ENCODE measurements at regions of chr17 and their contacts with region 1.

Region 1: GRCh38 chr17:50397111-50397918 is at the start of gene LRRC59:
- DNase-seq: peak; percentile 74 to 92 (median 84)
- H3K4me3 ChIP-seq: peak within 1 kb of the TSS; percentile 53 to 100 (median 93)
- H3K27ac ChIP-seq: peak within 1 kb of the TSS in 39 of 59 donors; percentile 7 to 88 (median 57)
- H3K27me3 ChIP-seq: no peaks in the 10 kb centered on the region
- CTCF ChIP-seq: peak; percentile 83 to 100 (median 99)
- total RNA-seq, gene LRRC59: 26.1 to 54.3 (median 38.0) TPM

Region 2: DNA sequence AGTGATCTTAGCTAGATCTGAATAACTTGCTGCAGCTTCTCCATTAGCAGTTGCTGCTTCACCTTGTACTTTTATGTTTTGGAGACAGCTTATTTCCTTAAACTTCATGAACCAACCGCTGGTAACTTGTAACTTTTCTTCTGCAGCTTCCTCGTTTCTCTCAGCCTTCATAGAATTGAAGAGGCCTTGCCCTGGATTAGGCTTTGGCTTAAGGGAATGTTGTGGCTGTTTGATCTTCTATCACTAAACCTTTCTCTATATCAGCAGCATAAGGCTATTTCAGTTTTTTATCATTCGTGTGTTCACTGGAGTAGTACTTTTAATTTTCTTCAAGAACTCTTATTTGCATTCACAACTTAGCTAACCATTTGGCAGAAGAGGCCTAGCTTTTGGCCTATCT is 144.5 kb before region 1 on chr17:
- intact Hi-C with region 1: no loop called
- DNase-seq: no peak
- H3K4me3 ChIP-seq: no peak overlapping the region
- H3K27ac ChIP-seq: no peak overlapping the region
- H3K27me3 ChIP-seq: peaks cover 0 to 15% (median 0%) of the 10 kb centered on the region in 45 donors
- CTCF ChIP-seq: no peak

Region 3: DNA sequence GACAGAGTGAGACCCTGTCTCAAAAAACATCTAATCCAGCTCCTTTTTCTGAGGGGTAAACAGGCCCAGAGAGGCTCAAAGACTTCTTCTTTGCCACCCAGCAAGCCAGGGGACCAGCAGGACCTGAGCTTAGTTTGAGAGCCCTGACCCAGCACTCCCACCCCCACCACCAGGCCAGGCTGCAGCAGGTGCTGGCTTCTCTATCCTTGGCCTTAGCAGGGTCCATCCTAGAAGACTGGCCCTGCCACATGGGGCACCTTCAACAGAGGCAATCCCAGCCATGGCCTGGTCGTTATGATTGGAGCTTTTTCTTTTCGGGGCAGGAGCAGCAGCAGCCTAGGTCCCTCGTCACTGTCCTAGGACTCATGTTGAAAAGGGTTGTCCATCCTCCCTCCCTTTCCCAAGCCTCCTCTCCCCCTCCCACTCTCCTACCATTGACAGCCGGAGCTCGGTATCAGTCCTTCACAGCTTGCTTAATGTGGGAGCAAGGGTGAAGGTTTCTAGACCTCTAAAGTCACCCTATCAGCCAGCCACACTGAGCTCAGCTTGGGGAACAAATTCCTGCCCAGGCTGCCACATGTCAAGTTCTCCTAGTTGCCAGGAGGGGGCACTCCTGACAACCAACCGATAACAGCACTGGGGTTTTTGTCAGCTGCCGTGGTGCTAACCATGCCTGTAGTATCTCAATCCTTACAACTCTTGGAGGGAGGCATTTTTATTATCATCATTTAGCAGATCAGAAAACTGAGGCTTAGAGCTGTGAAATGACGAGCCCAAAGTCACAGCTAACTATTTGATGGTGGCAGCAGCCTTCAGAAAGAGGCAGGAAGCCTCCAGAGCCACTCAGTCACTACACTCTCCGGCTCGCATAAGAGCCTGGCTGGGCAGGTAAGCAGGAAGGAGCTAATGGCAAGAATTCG is 35.5 kb before region 1 on chr17:
- intact Hi-C with region 1: loop called in 1 of 2 experiments (anchors 5 kb)
- DNase-seq: peak in 7 of 10 donors; percentile 46 to 73 (median 68)
- H3K4me3 ChIP-seq: peak overlapping the region in 1 of 59 donors; percentile 26
- H3K27ac ChIP-seq: peak overlapping the region in 19 of 59 donors; percentile 7 to 73 (median 20)
- H3K27me3 ChIP-seq: no peaks in the 10 kb centered on the region
- CTCF ChIP-seq: peak; percentile 42 to 83 (median 73)

Measured in dorsolateral prefrontal cortex (tissue), 120 donors.